ENCODE measurements at regions of chr15 and their contacts with region 1.

Region 1: DNA sequence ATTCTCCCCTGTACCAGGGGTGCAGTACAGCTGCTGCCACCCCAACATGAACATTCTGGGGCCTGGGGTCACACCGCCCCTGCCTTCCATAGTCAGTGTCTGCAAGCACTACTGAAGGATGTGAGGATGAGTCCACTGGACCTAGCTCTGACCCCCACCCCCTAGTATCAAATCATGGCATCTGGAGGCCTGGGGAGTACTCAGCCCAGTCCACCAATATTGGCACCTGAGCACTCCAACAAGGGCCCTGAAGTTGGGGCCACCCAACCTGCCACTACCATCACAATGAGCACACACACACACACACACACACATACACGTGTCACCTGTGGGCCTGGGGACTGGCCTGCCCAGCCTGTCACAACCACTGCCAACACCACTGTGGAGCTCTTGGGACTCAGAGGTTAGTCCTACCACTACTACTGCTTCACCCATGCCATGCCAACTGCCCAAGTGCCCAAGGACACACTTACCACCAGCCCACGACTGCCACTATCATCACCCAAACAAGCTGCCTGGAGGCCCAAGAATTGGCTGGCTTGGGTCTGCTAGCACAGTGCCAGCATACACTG is 253.9 kb downstream of the MCTP2 start:
- DNase-seq: no peak
- H3K4me3 ChIP-seq: no peak overlapping the region
- H3K4me3 Mint-ChIP-seq: no peak overlapping the region
- H3K27ac ChIP-seq: no peak overlapping the region
- H3K27ac Mint-ChIP-seq: no peak overlapping the region
- H3K4me1 ChIP-seq: no peaks in the 10 kb centered on the region
- H3K4me1 Mint-ChIP-seq: no peaks in the 10 kb centered on the region
- H3K27me3 ChIP-seq: no peaks in the 10 kb centered on the region
- H3K27me3 Mint-ChIP-seq: no peaks in the 10 kb centered on the region

Region 2: GRCh38 chr15:94238539-94239118 is 246.6 kb before region 1 on chr15:
- CTCF ChIA-PET with region 1: no interaction called
- POLR2A ChIA-PET with region 1: interaction called, 10 read pairs
- DNase-seq: no peak
- H3K4me3 ChIP-seq: no peak overlapping the region
- H3K4me3 Mint-ChIP-seq: peak overlapping the region in 4 of 7 donors; percentile 22 to 47 (median 26)
- H3K27ac ChIP-seq: no peak overlapping the region
- H3K27ac Mint-ChIP-seq: peak overlapping the region in 7 of 8 donors; percentile 4 to 89 (median 88)
- H3K4me1 ChIP-seq: peaks cover 8% of the 10 kb centered on the region
- H3K4me1 Mint-ChIP-seq: peaks cover 61 to 88% (median 81%) of the 10 kb centered on the region in 3 donors
- H3K27me3 ChIP-seq: no peaks in the 10 kb centered on the region
- H3K27me3 Mint-ChIP-seq: no peaks in the 10 kb centered on the region

Region 3: GRCh38 chr15:94412979-94413746 is 72.1 kb before region 1 on chr15:
- CTCF ChIA-PET with region 1: no interaction called
- POLR2A ChIA-PET with region 1: no interaction called
- DNase-seq: no peak
- H3K4me3 ChIP-seq: no peak overlapping the region
- H3K4me3 Mint-ChIP-seq: no peak overlapping the region
- H3K27ac ChIP-seq: no peak overlapping the region
- H3K27ac Mint-ChIP-seq: no peak overlapping the region
- H3K4me1 ChIP-seq: no peaks in the 10 kb centered on the region
- H3K4me1 Mint-ChIP-seq: no peaks in the 10 kb centered on the region
- H3K27me3 ChIP-seq: no peaks in the 10 kb centered on the region
- H3K27me3 Mint-ChIP-seq: no peaks in the 10 kb centered on the region

Region 4: DNA sequence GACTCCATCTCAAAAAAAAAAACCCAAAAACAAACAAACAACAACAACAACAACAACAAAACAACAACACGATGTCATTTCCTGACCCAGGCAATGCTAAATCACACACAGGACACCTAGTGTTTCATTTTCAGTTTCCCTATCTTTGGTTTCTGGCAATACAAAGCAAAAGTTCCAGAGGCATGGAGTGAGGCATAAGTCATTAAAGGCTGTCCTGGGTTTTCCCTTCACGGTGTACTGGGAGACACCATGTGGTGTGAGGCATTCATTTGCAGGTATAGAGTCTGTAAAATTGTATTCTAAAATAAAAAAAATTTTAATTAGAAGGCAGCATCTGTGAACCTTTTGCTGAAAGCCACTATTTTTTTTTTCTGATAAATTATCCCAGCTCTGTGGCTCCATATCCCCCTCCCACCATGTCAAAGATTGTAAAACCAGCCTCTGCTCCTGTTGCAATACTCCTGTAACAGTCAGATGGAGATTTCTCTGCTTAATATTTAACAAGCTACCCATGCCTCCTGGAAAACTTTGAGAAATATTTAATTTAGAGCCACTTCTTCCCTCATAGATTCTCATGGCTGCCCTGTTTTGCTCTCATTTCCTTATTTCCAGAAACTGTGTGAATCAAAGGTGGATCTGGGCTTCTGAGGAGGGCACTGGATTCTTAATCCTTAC is 70.7 kb after region 1 on chr15:
- CTCF ChIA-PET with region 1: no interaction called
- POLR2A ChIA-PET with region 1: no interaction called
- DNase-seq: no peak
- H3K4me3 ChIP-seq: no peak overlapping the region
- H3K4me3 Mint-ChIP-seq: no peak overlapping the region
- H3K27ac ChIP-seq: no peak overlapping the region
- H3K27ac Mint-ChIP-seq: no peak overlapping the region
- H3K4me1 ChIP-seq: no peaks in the 10 kb centered on the region
- H3K4me1 Mint-ChIP-seq: no peaks in the 10 kb centered on the region
- H3K27me3 ChIP-seq: no peaks in the 10 kb centered on the region
- H3K27me3 Mint-ChIP-seq: peaks cover 4 to 17% of the 10 kb centered on the region in 2 donors

Measured in CD8-positive, alpha-beta memory T cell (primary cell).